A549 (cell line): ENCODE measurements at regions of chr4 and their contacts with region 1.

Region 1: GRCh38 chr4:103091601-103092223 is 7.9 kb downstream of the BDH2 start:
- DNase-seq: peak in 1 of 2 experiments; percentile 66
- ATAC-seq: peak; percentile 64 to 73; a peak in 4 of 6 replicates
- H3K4me3 ChIP-seq: no peak overlapping the region
- H3K27ac ChIP-seq: no peak overlapping the region
- H3K4me1 ChIP-seq: no peaks in the 10 kb centered on the region; the same call in 2 of the 3 replicates
- CTCF ChIP-seq: peak; percentile 82
- EP300 ChIP-seq: no peak
- POLR2A ChIP-seq: no peak
- RAD21 ChIP-seq: peak; percentile 82 to 85

Region 2: DNA sequence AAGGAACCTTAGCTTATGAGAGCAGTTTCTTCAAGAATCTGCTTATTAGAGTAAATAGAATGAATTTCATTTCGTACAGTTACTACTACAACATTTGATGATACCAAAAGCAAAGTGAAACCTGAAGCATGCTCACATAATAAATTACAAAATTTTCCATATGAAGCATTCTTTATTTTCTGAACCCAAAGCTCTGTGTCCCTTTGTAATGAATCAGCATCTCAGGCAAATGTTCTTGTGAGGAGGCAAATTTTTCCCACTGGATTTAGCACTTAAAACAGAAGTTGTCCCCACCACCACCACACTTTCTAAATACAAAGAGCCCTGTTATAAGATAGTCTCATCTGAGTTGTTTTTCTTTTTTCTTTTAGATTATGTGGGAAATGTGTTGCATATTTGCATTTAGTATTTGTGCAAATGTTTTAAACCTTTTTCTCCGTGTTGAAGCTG is 661.2 kb before region 1 on chr4:
- CTCF ChIA-PET with region 1: interaction called, 12 read pairs
- POLR2A ChIA-PET with region 1: no interaction called
- DNase-seq: peak in 1 of 2 experiments; percentile 27
- ATAC-seq: no peak; a peak in 1 of 6 replicates
- H3K4me3 ChIP-seq: peak overlapping the region; percentile 75
- H3K27ac ChIP-seq: peak overlapping the region; percentile 93 to 97
- H3K4me1 ChIP-seq: peaks cover 8% of the 10 kb centered on the region
- CTCF ChIP-seq: no peak
- EP300 ChIP-seq: no peak
- POLR2A ChIP-seq: no peak
- RAD21 ChIP-seq: no peak

Region 3: GRCh38 chr4:102449751-102450352 is 641.9 kb before region 1 on chr4:
- CTCF ChIA-PET with region 1: interaction called, 13 read pairs
- POLR2A ChIA-PET with region 1: no interaction called
- DNase-seq: peak; percentile 18 to 62
- ATAC-seq: peak; percentile 73 to 81; a peak in 4 of 6 replicates
- H3K4me3 ChIP-seq: no peak overlapping the region
- H3K27ac ChIP-seq: no peak overlapping the region
- H3K4me1 ChIP-seq: no peaks in the 10 kb centered on the region
- CTCF ChIP-seq: peak; percentile 64
- EP300 ChIP-seq: no peak
- POLR2A ChIP-seq: no peak
- RAD21 ChIP-seq: peak; percentile 70 to 81

Region 4: GRCh38 chr4:103079621-103080020 is 12.1 kb before region 1 on chr4:
- CTCF ChIA-PET with region 1: interaction called, 25 read pairs
- POLR2A ChIA-PET with region 1: no interaction called
- DNase-seq: no peak
- ATAC-seq: no peak
- H3K4me3 ChIP-seq: no peak overlapping the region
- H3K27ac ChIP-seq: no peak overlapping the region
- H3K4me1 ChIP-seq: peaks cover 10% of the 10 kb centered on the region; the same call in 2 of the 3 replicates
- CTCF ChIP-seq: no peak
- EP300 ChIP-seq: no peak
- POLR2A ChIP-seq: no peak
- RAD21 ChIP-seq: no peak

Region 5: DNA sequence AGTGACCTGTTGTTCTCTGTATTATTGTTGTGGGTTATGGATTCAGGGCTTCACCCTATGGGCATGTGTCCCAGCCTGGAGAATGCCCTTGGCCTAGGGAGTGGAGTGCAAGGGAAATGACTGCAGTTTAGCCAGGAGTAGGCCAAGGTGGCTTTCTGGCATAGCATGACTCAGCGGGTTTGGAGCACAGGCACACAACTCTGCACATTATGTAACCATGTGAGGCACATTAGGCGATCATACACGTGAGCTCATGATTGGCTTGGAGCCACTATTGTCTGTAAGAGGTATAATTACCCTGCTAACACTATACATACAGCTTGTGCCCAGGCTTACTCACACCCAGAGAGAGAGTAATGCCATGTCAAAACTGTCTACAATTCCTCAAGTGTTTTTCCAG is 663.1 kb after region 1 on chr4:
- CTCF ChIA-PET with region 1: no interaction called
- POLR2A ChIA-PET with region 1: no interaction called
- DNase-seq: peak in 1 of 2 experiments; percentile 21
- ATAC-seq: no peak
- H3K4me3 ChIP-seq: no peak overlapping the region
- H3K27ac ChIP-seq: peak overlapping the region; percentile 28 to 47; a peak in 1 of 6 replicates
- H3K4me1 ChIP-seq: no peaks in the 10 kb centered on the region
- CTCF ChIP-seq: no peak
- EP300 ChIP-seq: no peak
- POLR2A ChIP-seq: no peak
- RAD21 ChIP-seq: no peak